ENCODE measurements at regions of chr1 and their contacts with region 1.

Region 1: DNA sequence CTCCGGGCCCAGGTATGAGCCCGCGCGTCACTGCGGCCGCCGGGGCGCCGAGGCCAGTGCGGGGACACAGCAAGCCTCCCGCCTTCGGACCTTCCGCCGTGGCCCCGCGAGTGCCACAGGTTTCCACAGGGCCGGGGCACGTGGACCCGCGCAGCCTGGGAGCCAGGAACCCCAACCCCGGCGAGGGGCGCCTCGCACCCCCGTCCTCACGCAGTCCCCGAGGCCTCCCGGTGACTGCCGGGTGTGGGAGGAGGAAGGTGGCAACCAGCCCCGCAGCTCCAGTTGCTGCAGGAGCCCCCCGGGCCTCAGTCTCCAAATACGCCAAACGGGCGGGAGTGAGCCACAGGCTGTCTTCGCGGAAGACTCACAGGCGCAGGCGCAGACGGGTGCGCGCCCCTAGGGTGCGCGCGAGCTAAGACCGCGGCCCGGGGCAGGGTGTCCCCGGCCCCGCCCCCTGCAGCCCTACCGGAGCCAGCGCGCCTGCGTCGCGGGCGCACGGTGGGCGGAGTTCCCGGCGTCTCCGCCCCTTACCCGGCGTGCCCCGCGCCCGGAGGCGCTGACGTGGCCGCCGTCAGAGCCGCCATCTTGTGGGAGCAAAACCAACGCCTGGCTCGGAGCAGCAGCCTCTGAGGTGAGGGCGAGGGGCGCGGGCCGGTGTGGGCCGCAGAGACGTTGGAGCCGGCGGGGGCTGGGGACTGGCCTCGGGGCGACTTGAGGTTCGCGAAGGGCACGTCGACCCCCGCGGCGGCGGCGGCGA is at the start of gene ARF1:
- DNase-seq: peak; percentile 94
- H3K4me3 Mint-ChIP-seq: peak within 1 kb of the TSS; percentile 90
- H3K27ac Mint-ChIP-seq: peak within 1 kb of the TSS; percentile 87
- H3K4me1 Mint-ChIP-seq: peaks cover 50% of the 10 kb centered on the region
- H3K27me3 Mint-ChIP-seq: no peaks in the 10 kb centered on the region
- total RNA-seq, gene ARF1: 368 to 376 TPM

Region 2: DNA sequence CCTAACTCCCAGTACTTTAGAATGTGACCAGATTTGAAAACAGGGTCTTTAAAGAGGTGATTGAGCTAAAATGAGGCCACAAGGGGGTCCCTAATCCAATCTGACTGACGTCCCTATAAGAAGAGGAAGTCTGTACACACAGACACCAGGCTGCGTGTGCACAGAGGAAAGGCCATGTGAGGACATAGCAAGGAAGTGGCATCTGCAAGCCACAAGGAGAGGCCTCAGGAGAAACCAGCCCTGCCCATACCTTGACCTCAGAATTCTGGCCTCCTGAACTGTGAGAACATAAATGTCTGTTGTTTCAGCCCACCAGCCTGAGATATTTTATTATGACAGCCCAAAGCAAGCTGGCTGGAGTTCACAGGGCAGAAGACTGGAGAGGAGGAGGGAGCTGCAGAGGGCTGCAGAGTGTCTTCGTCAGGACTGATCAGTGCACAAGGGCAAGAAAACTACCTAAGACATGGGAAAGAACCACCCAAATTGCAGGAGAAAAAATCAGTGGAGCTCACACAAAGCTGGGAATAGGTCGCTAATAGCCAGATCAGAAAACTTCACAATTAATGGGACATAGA is 120.6 kb before region 1 on chr1:
- CTCF ChIA-PET with region 1: no interaction called
- POLR2A ChIA-PET with region 1: no interaction called
- DNase-seq: peak; percentile 16
- H3K4me3 Mint-ChIP-seq: no peak overlapping the region
- H3K27ac Mint-ChIP-seq: no peak overlapping the region
- H3K4me1 Mint-ChIP-seq: peaks cover 13% of the 10 kb centered on the region
- H3K27me3 Mint-ChIP-seq: peaks cover 17% of the 10 kb centered on the region

Region 3: DNA sequence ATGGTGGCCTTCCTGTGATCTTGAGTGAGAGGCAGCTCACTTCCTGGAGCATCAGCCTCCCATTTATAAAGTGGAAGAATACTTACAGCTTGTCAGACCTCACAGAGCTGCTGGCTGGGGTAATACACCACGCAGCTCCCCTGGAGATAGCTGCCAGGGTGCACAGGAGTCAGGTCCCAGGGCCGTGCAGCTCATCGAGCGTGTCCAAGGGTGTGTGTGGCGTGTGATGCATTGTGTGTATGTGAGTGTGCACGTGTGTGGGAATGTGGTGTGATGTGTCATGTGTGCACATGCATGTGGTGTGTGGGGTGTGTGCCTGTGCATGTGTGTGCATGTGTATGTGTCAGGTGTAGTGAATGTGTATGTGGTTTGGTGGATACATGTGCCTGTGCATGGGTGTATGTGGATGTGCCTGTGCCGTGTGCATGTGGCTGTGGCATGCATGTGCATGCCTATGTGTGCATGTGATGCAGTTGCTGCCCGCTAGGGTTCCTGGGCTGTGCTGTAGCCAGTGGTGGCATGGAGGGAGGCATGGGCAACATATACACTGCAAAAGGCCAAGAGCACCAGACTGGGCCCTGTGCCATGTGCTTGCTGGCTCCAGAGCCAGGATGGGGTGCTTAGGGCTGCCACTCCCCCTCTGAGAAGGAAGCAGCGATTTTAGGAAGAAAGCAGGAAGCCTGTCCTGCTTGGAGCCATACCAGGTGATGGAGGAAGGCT is 50.9 kb before region 1 on chr1:
- CTCF ChIA-PET with region 1: no interaction called
- POLR2A ChIA-PET with region 1: no interaction called
- DNase-seq: no peak
- H3K4me3 Mint-ChIP-seq: no peak overlapping the region
- H3K27ac Mint-ChIP-seq: no peak overlapping the region
- H3K4me1 Mint-ChIP-seq: no peaks in the 10 kb centered on the region
- H3K27me3 Mint-ChIP-seq: peaks cover 17% of the 10 kb centered on the region

Region 4: DNA sequence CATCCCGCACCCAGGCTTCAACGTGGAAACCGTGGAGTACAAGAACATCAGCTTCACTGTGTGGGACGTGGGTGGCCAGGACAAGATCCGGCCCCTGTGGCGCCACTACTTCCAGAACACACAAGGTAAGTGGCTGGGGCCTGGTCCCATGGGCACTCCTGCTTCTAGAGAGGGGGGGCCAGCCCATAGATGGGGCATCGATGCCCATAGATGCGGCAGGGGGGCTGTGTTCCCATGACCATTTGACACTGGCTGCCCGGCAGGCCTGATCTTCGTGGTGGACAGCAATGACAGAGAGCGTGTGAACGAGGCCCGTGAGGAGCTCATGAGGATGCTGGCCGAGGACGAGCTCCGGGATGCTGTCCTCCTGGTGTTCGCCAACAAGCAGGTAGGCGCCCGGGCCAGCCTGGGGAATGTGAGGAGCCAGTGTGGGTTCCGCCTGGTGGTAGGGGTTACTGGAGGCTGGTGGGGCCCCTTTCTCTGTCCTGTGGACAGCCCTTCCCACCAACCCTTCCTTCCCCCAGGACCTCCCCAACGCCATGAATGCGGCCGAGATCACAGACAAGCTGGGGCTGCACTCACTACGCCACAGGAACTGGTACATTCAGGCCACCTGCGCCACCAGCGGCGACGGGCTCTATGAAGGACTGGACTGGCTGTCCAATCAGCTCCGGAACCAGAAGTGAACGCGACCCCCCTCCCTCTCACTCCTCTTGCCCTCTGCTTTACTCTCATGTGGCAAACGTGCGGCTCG is 15.2 kb after region 1 on chr1:
- CTCF ChIA-PET with region 1: interaction called, 4 read pairs
- POLR2A ChIA-PET with region 1: interaction called, 29 read pairs
- DNase-seq: no peak
- H3K4me3 Mint-ChIP-seq: no peak overlapping the region
- H3K27ac Mint-ChIP-seq: no peak overlapping the region
- H3K4me1 Mint-ChIP-seq: peaks cover 22% of the 10 kb centered on the region
- H3K27me3 Mint-ChIP-seq: no peaks in the 10 kb centered on the region

Region 5: GRCh38 chr1:228102791-228103620 is 20.7 kb after region 1 on chr1 and contains the start of gene C1orf35:
- CTCF ChIA-PET with region 1: interaction called, 4 read pairs
- POLR2A ChIA-PET with region 1: interaction called, 39 read pairs
- DNase-seq: peak; percentile 96
- H3K4me3 Mint-ChIP-seq: peak within 1 kb of the TSS; percentile 85
- H3K27ac Mint-ChIP-seq: peak within 1 kb of the TSS; percentile 86
- H3K4me1 Mint-ChIP-seq: peaks cover 42% of the 10 kb centered on the region
- H3K27me3 Mint-ChIP-seq: no peaks in the 10 kb centered on the region
- total RNA-seq, gene C1orf35: 17.8 to 18.9 TPM

Region 6: GRCh38 chr1:228109073-228109961 is 27.0 kb after region 1 on chr1 and contains the start of gene MRPL55:
- CTCF ChIA-PET with region 1: interaction called, 5 read pairs
- POLR2A ChIA-PET with region 1: interaction called, 39 read pairs
- DNase-seq: peak; percentile 99
- H3K4me3 Mint-ChIP-seq: peak within 1 kb of the TSS; percentile 87
- H3K27ac Mint-ChIP-seq: peak within 1 kb of the TSS; percentile 79
- H3K4me1 Mint-ChIP-seq: peaks cover 43% of the 10 kb centered on the region
- H3K27me3 Mint-ChIP-seq: no peaks in the 10 kb centered on the region
- total RNA-seq, gene MRPL55: 43.1 to 43.9 TPM